ENCODE measurements at regions of chr6 and their contacts with region 1.

Region 1: GRCh38 chr6:135535989-135536414 is 38.5 kb upstream of the AHI1 start:
- DNase-seq: peak; percentile 29 to 53 (median 43)
- ATAC-seq: peak; percentile 81
- H3K4me3 ChIP-seq: no peak overlapping the region
- H3K27ac ChIP-seq: no peak overlapping the region
- H3K4me1 ChIP-seq: no peaks in the 10 kb centered on the region
- H3K27me3 ChIP-seq: no peaks in the 10 kb centered on the region
- CTCF ChIP-seq: peak; percentile 57 to 85 (median 73); a peak in 5 of 6 replicates
- EP300 ChIP-seq: no peak
- POLR2A ChIP-seq: no peak
- RAD21 ChIP-seq: peak; percentile 86 to 89

Region 2: DNA sequence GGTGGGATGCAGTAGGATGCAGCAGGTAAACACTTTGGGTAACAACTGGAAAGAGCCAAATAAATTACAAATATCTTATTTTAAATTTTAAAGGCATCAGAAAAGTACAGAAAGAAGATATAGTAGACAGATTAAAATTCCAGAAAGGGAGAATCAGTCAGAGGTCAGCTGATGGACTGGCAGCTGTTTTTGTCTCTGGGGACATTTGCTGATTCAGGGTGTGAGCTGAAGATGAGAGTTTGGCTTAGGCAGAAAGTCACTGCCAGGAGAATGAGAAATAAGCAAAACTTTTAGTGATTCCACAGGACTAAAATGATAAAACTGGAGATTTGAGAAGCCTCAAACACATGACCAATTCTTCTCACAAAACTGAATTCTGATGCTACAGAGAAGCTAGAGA is 78.0 kb before region 1 on chr6:
- CTCF ChIA-PET with region 1: no interaction called
- POLR2A ChIA-PET with region 1: no interaction called
- in situ Hi-C with region 1: loop called (anchors 5 kb)
- intact Hi-C with region 1: no loop called
- DNase-seq: no peak
- ATAC-seq: no peak
- H3K4me3 ChIP-seq: no peak overlapping the region
- H3K27ac ChIP-seq: no peak overlapping the region
- H3K4me1 ChIP-seq: no peaks in the 10 kb centered on the region
- H3K27me3 ChIP-seq: no peaks in the 10 kb centered on the region
- CTCF ChIP-seq: no peak
- EP300 ChIP-seq: no peak
- POLR2A ChIP-seq: no peak
- RAD21 ChIP-seq: no peak

Region 3: GRCh38 chr6:135506270-135506997 is 29.6 kb before region 1 on chr6:
- CTCF ChIA-PET with region 1: interaction called, 3 read pairs
- POLR2A ChIA-PET with region 1: no interaction called
- in situ Hi-C with region 1: no loop called
- intact Hi-C with region 1: loop called (anchors 1 kb)
- DNase-seq: peak; percentile 29 to 67 (median 48)
- ATAC-seq: peak; percentile 93
- H3K4me3 ChIP-seq: no peak overlapping the region
- H3K27ac ChIP-seq: no peak overlapping the region
- H3K4me1 ChIP-seq: peaks cover 0 to 6% of the 10 kb centered on the region in 2 experiments; a peak in 3 of 5 replicates
- H3K27me3 ChIP-seq: no peaks in the 10 kb centered on the region
- CTCF ChIP-seq: peak; percentile 49 to 90 (median 73); a peak in 5 of 6 replicates
- EP300 ChIP-seq: no peak
- POLR2A ChIP-seq: no peak
- RAD21 ChIP-seq: peak; percentile 93 to 94

Region 4: DNA sequence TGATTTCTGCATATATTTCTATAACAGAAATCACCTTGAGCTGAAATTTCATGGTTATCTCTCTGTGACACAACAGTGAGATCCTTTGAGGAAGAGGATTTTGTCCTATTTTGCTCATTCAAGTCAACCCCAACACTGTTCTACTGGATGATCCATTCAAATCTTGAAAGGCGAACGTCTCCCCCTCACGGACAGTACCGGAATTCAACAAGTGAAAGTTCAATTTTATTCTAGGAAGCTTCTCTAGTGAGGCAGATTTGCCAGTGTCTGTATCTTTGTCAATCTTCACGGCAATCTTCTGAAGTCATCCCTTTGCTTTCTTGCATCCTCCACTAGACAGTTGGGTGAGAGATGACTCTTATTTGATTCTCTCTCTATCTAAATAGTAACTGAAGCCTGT is 223.8 kb after region 1 on chr6:
- CTCF ChIA-PET with region 1: no interaction called
- POLR2A ChIA-PET with region 1: no interaction called
- in situ Hi-C with region 1: no loop called
- intact Hi-C with region 1: loop called (anchors 2 kb)
- DNase-seq: peak in 1 of 4 experiments; percentile 22
- ATAC-seq: peak; percentile 69
- H3K4me3 ChIP-seq: no peak overlapping the region
- H3K27ac ChIP-seq: no peak overlapping the region
- H3K4me1 ChIP-seq: no peaks in the 10 kb centered on the region
- H3K27me3 ChIP-seq: no peaks in the 10 kb centered on the region
- CTCF ChIP-seq: peak; percentile 31 to 48 (median 39); a peak in 4 of 6 replicates
- EP300 ChIP-seq: no peak
- POLR2A ChIP-seq: no peak
- RAD21 ChIP-seq: peak; percentile 63 to 66

Region 5: DNA sequence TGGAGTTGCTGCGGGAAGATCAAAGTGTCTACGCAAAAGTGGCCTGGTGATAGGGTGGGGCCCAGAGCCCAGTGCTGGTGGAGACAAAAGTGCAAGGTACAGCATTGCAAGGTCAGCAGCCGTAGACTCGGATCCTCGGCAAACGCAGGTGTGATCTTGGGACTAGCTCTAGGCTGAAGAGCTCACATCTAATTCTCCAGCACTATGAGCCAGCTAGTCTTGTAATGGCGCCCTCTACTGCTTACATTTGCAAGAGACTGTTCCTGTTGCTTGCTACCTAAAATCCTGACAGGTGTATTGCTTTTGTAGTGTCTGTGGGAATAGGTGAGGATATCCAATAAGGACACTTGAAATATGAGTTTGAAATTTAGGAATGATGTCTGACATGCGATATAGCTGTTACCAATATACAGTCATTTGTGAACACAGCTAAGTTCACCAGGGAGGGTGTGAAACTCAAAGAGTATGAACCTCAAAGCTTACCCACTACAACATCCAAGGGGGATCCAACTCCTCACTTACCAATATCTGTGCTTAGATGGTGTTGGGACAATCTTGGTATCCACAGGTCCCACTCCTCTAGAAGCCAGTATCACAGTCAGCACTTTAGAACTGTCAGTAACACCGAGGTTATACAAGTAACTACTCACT is 373.9 kb after region 1 on chr6:
- CTCF ChIA-PET with region 1: interaction called, 3 read pairs
- POLR2A ChIA-PET with region 1: no interaction called
- in situ Hi-C with region 1: no loop called
- intact Hi-C with region 1: loop called (anchors 5 kb)
- DNase-seq: peak; percentile 35 to 74 (median 49)
- ATAC-seq: peak; percentile 96
- H3K4me3 ChIP-seq: no peak overlapping the region
- H3K27ac ChIP-seq: no peak overlapping the region
- H3K4me1 ChIP-seq: no peaks in the 10 kb centered on the region
- H3K27me3 ChIP-seq: peaks cover 0 to 2% of the 10 kb centered on the region in 2 experiments; a peak in 1 of 5 replicates
- CTCF ChIP-seq: peak; percentile 70 to 74 (median 71)
- EP300 ChIP-seq: no peak
- POLR2A ChIP-seq: no peak
- RAD21 ChIP-seq: peak; percentile 59 to 72